ENCODE measurements at regions of chr19 and their contacts with region 1.

Region 1: GRCh38 chr19:47124937-47125668 is 5.5 kb upstream of the SAE1 start:
- DNase-seq: no peak
- H3K4me3 ChIP-seq: no peak overlapping the region
- H3K27ac ChIP-seq: no peak overlapping the region
- H3K4me1 ChIP-seq: no peaks in the 10 kb centered on the region
- H3K27me3 ChIP-seq: no peaks in the 10 kb centered on the region
- CTCF ChIP-seq: peak; percentile 67

Region 2: GRCh38 chr19:47035127-47036096 is 89.7 kb before region 1 on chr19:
- intact Hi-C with region 1: loop called (anchors 10 kb)
- DNase-seq: peak; percentile 96
- H3K4me3 ChIP-seq: peak overlapping the region; percentile 38
- H3K27ac ChIP-seq: peak overlapping the region; percentile 42
- H3K4me1 ChIP-seq: no peaks in the 10 kb centered on the region
- H3K27me3 ChIP-seq: no peaks in the 10 kb centered on the region
- CTCF ChIP-seq: peak; percentile 94

Region 3: GRCh38 chr19:47075179-47075810 is 49.8 kb before region 1 on chr19:
- intact Hi-C with region 1: loop called (anchors 1 kb)
- DNase-seq: no peak
- H3K4me3 ChIP-seq: no peak overlapping the region
- H3K27ac ChIP-seq: no peak overlapping the region
- H3K4me1 ChIP-seq: peaks cover 3% of the 10 kb centered on the region
- H3K27me3 ChIP-seq: no peaks in the 10 kb centered on the region
- CTCF ChIP-seq: no peak

Region 4: DNA sequence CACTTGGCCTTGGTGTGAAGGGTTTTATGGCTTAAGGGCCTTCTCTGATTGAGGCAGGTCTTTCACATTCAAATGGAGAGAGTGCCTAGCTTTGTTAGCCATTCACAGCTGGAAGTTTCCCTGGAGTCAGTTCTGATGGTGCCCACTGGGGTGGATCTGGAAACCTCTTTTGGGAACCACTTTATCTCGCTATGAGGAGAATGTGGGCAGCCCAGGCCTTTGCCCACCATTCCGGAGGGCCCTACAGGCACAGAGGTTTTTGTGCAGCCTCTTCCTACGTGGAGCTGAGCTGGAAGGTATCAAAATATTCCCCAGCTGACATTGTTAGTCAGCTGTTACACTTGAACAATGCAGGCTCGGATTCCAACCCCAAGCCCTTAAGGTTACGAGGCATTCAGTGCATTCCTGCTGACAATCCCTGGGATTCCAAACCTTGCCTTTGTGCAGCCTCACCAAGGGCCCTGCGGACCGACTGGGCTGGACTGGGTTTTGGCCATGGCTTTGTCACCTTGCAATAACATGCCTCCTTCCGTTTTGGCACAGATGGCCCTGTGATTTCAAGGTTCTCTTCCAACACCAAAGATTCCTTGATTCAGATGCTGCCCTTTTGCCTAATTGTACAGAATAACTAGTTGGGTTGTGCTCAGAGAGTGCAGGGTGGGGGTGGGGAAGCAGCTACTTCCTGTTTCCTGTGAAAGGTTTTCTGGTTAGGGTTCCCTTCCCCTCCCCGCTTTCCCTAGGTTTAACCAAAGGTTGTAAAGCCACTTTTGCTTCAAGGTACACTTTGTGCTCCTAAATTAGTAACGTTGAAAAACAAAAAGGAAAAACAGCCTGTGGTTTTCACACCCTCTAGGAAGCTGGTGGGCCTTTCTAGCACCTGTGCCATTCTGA is 32.6 kb after region 1 on chr19:
- intact Hi-C with region 1: no loop called
- DNase-seq: peak; percentile 62
- H3K4me3 ChIP-seq: no peak overlapping the region
- H3K27ac ChIP-seq: peak overlapping the region; percentile 84
- H3K4me1 ChIP-seq: peaks cover 25% of the 10 kb centered on the region
- H3K27me3 ChIP-seq: no peaks in the 10 kb centered on the region
- CTCF ChIP-seq: no peak

Measured in colonic mucosa (tissue), 4 donors.